Spleen (tissue), 13 donors: ENCODE measurements at regions of chr1 and their contacts with region 1.

Region 1: GRCh38 chr1:232635778-232636356 is 5.9 kb upstream of the SIPA1L2 start:
- DNase-seq: no peak
- H3K4me3 ChIP-seq: no peak overlapping the region
- H3K27ac ChIP-seq: no peak overlapping the region
- H3K4me1 ChIP-seq: peaks cover under 1 to 30% (median 5%) of the 10 kb centered on the region in 6 donors
- H3K27me3 ChIP-seq: peaks cover 0 to 13% (median 0%) of the 10 kb centered on the region in 7 donors
- CTCF ChIP-seq: peak; percentile 28 to 88 (median 77)
- POLR2A ChIP-seq: no peak

Region 2: GRCh38 chr1:232880354-232880753 is 244.5 kb after region 1 on chr1:
- intact Hi-C with region 1: no loop called
- DNase-seq: no peak
- H3K4me3 ChIP-seq: no peak overlapping the region
- H3K27ac ChIP-seq: no peak overlapping the region
- H3K4me1 ChIP-seq: no peaks in the 10 kb centered on the region
- H3K27me3 ChIP-seq: peaks cover 0 to 12% (median 0%) of the 10 kb centered on the region in 7 donors
- CTCF ChIP-seq: peak in 5 of 11 experiments; percentile 12 to 42 (median 28)
- POLR2A ChIP-seq: no peak

Region 3: DNA sequence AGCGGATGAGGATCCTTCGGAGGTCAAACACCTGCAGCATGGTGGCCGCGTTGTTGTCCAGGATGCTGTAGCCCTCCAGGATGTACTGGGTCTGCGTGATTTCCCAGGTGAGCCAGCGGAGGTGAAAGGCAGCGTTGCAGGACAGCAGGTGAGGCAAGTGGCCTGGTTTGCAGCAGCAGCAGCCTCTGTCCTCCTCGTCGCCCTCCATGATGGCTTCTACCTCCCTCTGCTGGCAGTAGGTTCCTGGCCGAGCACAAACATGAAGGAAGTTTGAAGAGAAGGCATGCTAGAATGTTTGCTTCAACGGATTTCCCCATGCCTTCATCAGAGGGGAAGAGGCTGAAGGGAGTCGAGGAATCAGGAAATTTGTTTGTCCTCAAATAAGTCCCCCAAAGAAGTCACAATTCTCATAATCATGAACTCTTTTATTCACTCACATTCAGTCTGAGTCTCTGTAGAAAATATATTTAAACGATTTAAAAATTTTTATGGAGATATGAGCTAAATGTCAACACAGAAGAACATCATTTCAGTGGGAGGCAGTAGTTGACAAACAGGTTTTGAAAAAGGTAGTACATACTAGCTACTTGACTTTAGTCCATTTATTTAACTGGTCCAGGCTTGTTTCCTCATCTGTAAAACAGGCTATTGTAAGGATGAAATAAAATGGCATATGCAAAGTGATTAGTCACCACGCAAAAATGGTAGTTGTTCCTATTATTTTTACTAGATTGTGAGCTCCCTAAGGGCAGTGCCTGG is 389.5 kb after region 1 on chr1:
- intact Hi-C with region 1: loop called (anchors 5 kb)
- DNase-seq: no peak
- H3K4me3 ChIP-seq: no peak overlapping the region
- H3K27ac ChIP-seq: no peak overlapping the region
- H3K4me1 ChIP-seq: peaks cover 0 to 9% (median 0%) of the 10 kb centered on the region in 6 donors
- H3K27me3 ChIP-seq: no peaks in the 10 kb centered on the region
- CTCF ChIP-seq: peak in 7 of 11 experiments; percentile 31 to 53 (median 37)
- POLR2A ChIP-seq: no peak